ENCODE measurements at regions of chr6 and their contacts with region 1.

Region 1: GRCh38 chr6:118660218-118660569 is 8.8 kb upstream of the CEP85L start:
- DNase-seq: peak; percentile 24 to 88 (median 67)
- ATAC-seq: peak; percentile 76
- H3K4me3 ChIP-seq: no peak overlapping the region
- H3K4me3 Mint-ChIP-seq: peak overlapping the region; percentile 40
- H3K27ac ChIP-seq: no peak overlapping the region
- H3K27ac Mint-ChIP-seq: peak overlapping the region; percentile 86
- H3K4me1 ChIP-seq: peaks cover 51% of the 10 kb centered on the region
- H3K4me1 Mint-ChIP-seq: peaks cover 69% of the 10 kb centered on the region
- H3K27me3 ChIP-seq: no peaks in the 10 kb centered on the region
- H3K27me3 Mint-ChIP-seq: no peaks in the 10 kb centered on the region
- CTCF ChIP-seq: no peak

Region 2: GRCh38 chr6:118725944-118726343 is 65.8 kb after region 1 on chr6:
- CTCF ChIA-PET with region 1: interaction called, 3 read pairs
- POLR2A ChIA-PET with region 1: no interaction called
- intact Hi-C with region 1: loop called in 1 of 2 experiments (anchors 2 kb)
- DNase-seq: peak in 8 of 9 experiments; percentile 52 to 88 (median 74)
- ATAC-seq: peak; percentile 92
- H3K4me3 ChIP-seq: no peak overlapping the region
- H3K4me3 Mint-ChIP-seq: peak overlapping the region; percentile 38
- H3K27ac ChIP-seq: peak overlapping the region in 1 of 2 experiments; percentile 36
- H3K27ac Mint-ChIP-seq: peak overlapping the region; percentile 82
- H3K4me1 ChIP-seq: peaks cover 49% of the 10 kb centered on the region
- H3K4me1 Mint-ChIP-seq: peaks cover 67% of the 10 kb centered on the region
- H3K27me3 ChIP-seq: no peaks in the 10 kb centered on the region
- H3K27me3 Mint-ChIP-seq: no peaks in the 10 kb centered on the region
- CTCF ChIP-seq: peak; percentile 33